ENCODE measurements at regions of chr11 and their contacts with region 1.

Region 1: DNA sequence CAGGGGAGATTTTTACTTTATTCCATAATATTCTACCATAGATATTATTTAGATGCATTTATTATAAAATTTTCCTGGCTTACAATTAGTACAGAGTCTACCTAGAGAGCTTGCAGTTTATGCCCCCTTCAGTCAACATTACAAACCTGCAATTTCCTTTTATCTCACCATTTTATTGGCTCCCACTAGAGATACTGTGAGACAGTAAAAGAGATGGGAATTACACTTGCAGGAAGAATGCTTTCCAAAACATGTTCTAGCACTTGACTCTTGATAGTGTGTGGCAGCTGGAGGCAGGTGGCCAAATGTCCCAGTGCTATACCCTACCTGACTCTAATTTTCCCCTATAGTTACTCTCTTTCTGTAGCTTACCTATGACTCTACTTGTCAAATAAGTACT is 863.2 kb downstream of the DLG2 start:
- DNase-seq: no peak
- H3K4me3 ChIP-seq: no peak overlapping the region
- H3K4me3 Mint-ChIP-seq: no peak overlapping the region
- H3K27ac Mint-ChIP-seq: no peak overlapping the region
- H3K4me1 ChIP-seq: no peaks in the 10 kb centered on the region
- H3K4me1 Mint-ChIP-seq: no peaks in the 10 kb centered on the region
- H3K27me3 ChIP-seq: no peaks in the 10 kb centered on the region
- H3K27me3 Mint-ChIP-seq: peaks cover 4% of the 10 kb centered on the region
- CTCF ChIP-seq: no peak

Region 2: DNA sequence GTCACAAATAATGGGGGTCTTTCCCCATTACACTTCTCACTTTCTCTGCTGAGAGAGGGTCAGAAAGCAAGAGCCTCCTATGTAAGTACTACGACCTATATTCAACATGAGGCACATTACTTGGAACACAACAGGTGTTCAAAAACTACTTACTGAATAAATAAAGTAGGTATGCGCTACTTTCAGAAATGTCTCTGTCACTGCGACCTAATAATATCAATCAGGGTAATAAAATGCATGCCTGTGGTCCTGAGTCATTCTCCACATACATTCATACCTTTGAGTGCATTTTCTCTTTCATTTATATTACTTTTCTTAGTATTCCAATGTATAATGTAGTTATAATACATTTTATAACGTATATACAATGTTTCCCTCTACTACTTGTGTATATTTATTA is 24.3 kb after region 1 on chr11:
- CTCF ChIA-PET with region 1: no interaction called
- POLR2A ChIA-PET with region 1: no interaction called
- intact Hi-C with region 1: loop called (anchors 1 kb)
- DNase-seq: peak in 1 of 2 experiments; percentile 17
- H3K4me3 ChIP-seq: no peak overlapping the region
- H3K4me3 Mint-ChIP-seq: no peak overlapping the region
- H3K27ac Mint-ChIP-seq: no peak overlapping the region
- H3K4me1 ChIP-seq: peaks cover 7% of the 10 kb centered on the region; the same call in 1 of the 2 replicates
- H3K4me1 Mint-ChIP-seq: no peaks in the 10 kb centered on the region
- H3K27me3 ChIP-seq: no peaks in the 10 kb centered on the region
- H3K27me3 Mint-ChIP-seq: peaks cover 3% of the 10 kb centered on the region
- CTCF ChIP-seq: no peak

Region 3: DNA sequence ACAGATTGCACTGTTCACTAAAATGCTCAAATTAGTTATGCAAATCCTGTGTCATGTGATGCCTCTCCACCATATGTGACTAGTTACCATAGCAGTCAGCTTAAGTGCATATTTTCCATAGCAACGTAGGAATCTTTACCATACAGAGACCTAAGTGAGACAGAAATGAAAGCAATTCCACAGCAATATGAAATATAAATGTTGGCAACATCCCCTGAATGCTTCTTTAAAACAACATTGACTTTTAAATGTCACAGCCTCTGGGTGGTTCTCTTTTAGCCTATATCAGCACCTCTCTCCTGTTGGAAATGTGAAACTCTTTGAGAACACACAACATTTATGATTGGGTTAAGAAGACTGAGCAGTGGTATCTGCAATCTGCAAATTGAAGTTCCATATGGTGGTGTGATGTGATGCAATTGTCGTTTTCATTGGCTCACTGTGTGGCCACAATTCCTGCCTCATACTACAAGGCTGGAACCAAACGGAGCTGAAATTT is 48.6 kb after region 1 on chr11:
- CTCF ChIA-PET with region 1: no interaction called
- POLR2A ChIA-PET with region 1: no interaction called
- intact Hi-C with region 1: no loop called
- DNase-seq: no peak
- H3K4me3 ChIP-seq: no peak overlapping the region
- H3K4me3 Mint-ChIP-seq: no peak overlapping the region
- H3K27ac Mint-ChIP-seq: no peak overlapping the region
- H3K4me1 ChIP-seq: no peaks in the 10 kb centered on the region
- H3K4me1 Mint-ChIP-seq: no peaks in the 10 kb centered on the region
- H3K27me3 ChIP-seq: no peaks in the 10 kb centered on the region
- H3K27me3 Mint-ChIP-seq: peaks cover 5% of the 10 kb centered on the region
- CTCF ChIP-seq: no peak

Measured in Caco-2 (cell line).